CD4-positive, alpha-beta memory T cell (primary cell): ENCODE measurements at regions of chr1 and their contacts with region 1.

Region 1: DNA sequence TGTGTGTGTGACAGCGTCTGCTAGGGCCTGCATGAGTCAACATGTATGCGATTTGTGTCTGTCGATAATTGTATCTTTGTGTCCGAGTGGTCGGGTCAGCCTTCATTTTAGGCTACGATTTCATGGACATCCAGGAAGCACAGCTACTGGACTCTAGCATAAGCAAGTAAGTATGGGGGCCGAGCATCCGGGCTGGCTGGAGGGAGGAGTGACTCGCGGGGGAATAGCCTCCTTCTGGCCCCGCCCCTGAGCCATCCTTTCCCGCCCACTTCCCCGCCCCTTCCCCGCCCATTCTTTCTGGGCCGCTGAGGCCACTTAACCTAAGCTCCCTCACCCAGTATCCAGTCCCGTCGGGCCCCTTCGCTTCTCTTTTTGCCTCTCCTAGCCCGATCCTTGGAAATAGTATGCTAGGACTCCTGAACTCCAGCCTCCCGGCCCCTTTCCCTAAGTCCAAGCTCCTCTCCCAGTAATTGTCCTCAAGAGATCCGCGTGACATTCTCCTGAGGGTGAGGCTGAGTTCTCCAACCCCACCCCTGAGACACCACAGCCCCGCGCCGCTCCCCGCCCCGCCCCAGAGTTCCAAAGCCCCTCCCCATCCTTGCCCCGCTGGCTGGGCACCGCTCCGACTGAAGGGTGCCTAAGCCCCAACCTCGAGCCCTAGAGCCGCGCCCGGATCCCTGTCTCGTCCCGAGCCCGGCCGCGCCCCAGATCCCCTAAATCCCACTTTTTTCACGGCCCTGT is 1.2 kb downstream of the MAP3K6 start:
- DNase-seq: peak; percentile 65 to 76 (median 67)
- H3K4me3 ChIP-seq: peak overlapping the region; percentile 36 to 54
- H3K4me3 Mint-ChIP-seq: peak overlapping the region; percentile 86 to 94 (median 88)
- H3K27ac ChIP-seq: peak overlapping the region; percentile 51
- H3K27ac Mint-ChIP-seq: peak overlapping the region; percentile 49 to 88 (median 77)
- H3K4me1 ChIP-seq: peaks cover 18% of the 10 kb centered on the region
- H3K4me1 Mint-ChIP-seq: peaks cover 13 to 52% (median 25%) of the 10 kb centered on the region in 4 donors
- H3K27me3 ChIP-seq: no peaks in the 10 kb centered on the region
- H3K27me3 Mint-ChIP-seq: no peaks in the 10 kb centered on the region

Region 2: GRCh38 chr1:27332536-27333281 is 32.8 kb before region 1 on chr1:
- CTCF ChIA-PET with region 1: interaction called, 54 read pairs
- POLR2A ChIA-PET with region 1: interaction called, 6 read pairs
- intact Hi-C with region 1: no loop called
- DNase-seq: peak; percentile 54 to 65 (median 58)
- H3K4me3 ChIP-seq: no peak overlapping the region
- H3K4me3 Mint-ChIP-seq: peak overlapping the region in 2 of 8 donors; percentile 7 to 25
- H3K27ac ChIP-seq: peak overlapping the region; percentile 10
- H3K27ac Mint-ChIP-seq: peak overlapping the region in 6 of 7 donors; percentile 5 to 75 (median 61)
- H3K4me1 ChIP-seq: peaks cover 33% of the 10 kb centered on the region
- H3K4me1 Mint-ChIP-seq: peaks cover 22 to 48% (median 34%) of the 10 kb centered on the region in 4 donors
- H3K27me3 ChIP-seq: no peaks in the 10 kb centered on the region
- H3K27me3 Mint-ChIP-seq: no peaks in the 10 kb centered on the region

Region 3: DNA sequence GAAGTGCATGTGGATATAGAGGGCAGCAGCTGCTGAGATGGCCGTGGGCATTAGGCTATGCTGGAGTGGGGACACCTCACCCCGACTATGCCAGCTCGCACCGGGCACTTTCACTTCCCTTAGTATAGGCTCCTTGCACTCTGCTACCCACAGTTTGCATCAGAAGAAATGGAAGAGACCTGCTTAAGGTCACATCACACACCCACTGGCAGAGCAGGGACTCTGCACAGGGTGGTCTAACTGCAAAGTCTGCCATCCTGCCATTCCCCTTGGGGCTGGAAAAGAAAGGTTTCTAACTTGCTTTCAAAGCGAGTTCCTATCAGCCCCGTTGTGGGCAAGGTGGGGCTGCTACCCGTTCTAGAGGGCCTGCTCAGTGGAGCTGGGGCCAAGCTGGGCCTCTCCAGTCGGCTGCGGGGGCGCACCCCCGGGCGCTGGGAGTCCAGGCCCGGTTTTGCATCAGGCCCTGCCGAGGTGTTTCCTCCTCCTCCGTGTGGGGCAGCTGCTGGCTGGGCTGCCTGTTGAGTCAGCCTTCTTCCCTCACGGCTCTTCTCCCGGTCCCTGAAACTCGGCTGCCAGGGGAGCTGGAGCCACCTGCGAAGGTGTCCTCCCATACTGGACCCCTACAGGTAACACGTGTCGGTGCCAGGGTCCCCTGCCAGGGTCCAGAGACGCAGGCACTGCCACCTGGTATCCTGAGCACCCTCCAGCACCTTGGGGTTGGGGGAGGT is 23.9 kb before region 1 on chr1 and contains the start of gene SYTL1:
- CTCF ChIA-PET with region 1: interaction called, 105 read pairs
- POLR2A ChIA-PET with region 1: interaction called, 202 read pairs
- intact Hi-C with region 1: no loop called
- DNase-seq: peak; percentile 63 to 77 (median 69)
- H3K4me3 ChIP-seq: peak within 1 kb of the TSS; percentile 82 to 94
- H3K4me3 Mint-ChIP-seq: peak within 1 kb of the TSS; percentile 90 to 99 (median 97)
- H3K27ac ChIP-seq: peak within 1 kb of the TSS; percentile 80
- H3K27ac Mint-ChIP-seq: peak within 1 kb of the TSS; percentile 92 to 96 (median 95)
- H3K4me1 ChIP-seq: peaks cover 48% of the 10 kb centered on the region
- H3K4me1 Mint-ChIP-seq: peaks cover 30 to 68% (median 47%) of the 10 kb centered on the region in 4 donors
- H3K27me3 ChIP-seq: no peaks in the 10 kb centered on the region
- H3K27me3 Mint-ChIP-seq: no peaks in the 10 kb centered on the region
- total RNA-seq, gene SYTL1: 146 to 158 TPM

Region 4: GRCh38 chr1:27349784-27350662 is 15.5 kb before region 1 on chr1:
- CTCF ChIA-PET with region 1: interaction called, 105 read pairs
- POLR2A ChIA-PET with region 1: interaction called, 202 read pairs
- intact Hi-C with region 1: no loop called
- DNase-seq: no peak
- H3K4me3 ChIP-seq: no peak overlapping the region
- H3K4me3 Mint-ChIP-seq: no peak overlapping the region
- H3K27ac ChIP-seq: no peak overlapping the region
- H3K27ac Mint-ChIP-seq: no peak overlapping the region
- H3K4me1 ChIP-seq: peaks cover 26% of the 10 kb centered on the region
- H3K4me1 Mint-ChIP-seq: peaks cover 7 to 24% (median 9%) of the 10 kb centered on the region in 4 donors
- H3K27me3 ChIP-seq: no peaks in the 10 kb centered on the region
- H3K27me3 Mint-ChIP-seq: no peaks in the 10 kb centered on the region